Transverse colon (tissue), 4 donors: ENCODE measurements at regions of chr15 and their contacts with region 1.

Region 1: GRCh38 chr15:64046347-64047153 is at the start of gene DAPK2:
- DNase-seq: peak; percentile 83
- H3K4me3 ChIP-seq: peak within 1 kb of the TSS; percentile 58 to 83 (median 66)
- H3K27ac ChIP-seq: peak within 1 kb of the TSS; percentile 44 to 85 (median 78)
- H3K4me1 ChIP-seq: peaks cover 7 to 28% (median 22%) of the 10 kb centered on the region in 4 donors
- H3K27me3 ChIP-seq: no peaks in the 10 kb centered on the region
- CTCF ChIP-seq: peak; percentile 67 to 83 (median 71)
- EP300 ChIP-seq: no peak
- POLR2A ChIP-seq: no peak
- total RNA-seq, gene DAPK2: 45.1 to 244 (median 107) TPM

Region 2: GRCh38 chr15:63945007-63945788 is 101.4 kb before region 1 on chr15:
- in situ Hi-C with region 1: loop called in 1 of 4 experiments (anchors 25 kb)
- intact Hi-C with region 1: loop called (anchors 5 kb)
- DNase-seq: peak; percentile 83
- H3K4me3 ChIP-seq: no peak overlapping the region
- H3K27ac ChIP-seq: no peak overlapping the region
- H3K4me1 ChIP-seq: peaks cover 0 to 10% (median 1%) of the 10 kb centered on the region in 4 donors
- H3K27me3 ChIP-seq: no peaks in the 10 kb centered on the region
- CTCF ChIP-seq: peak; percentile 90 to 96 (median 94)
- EP300 ChIP-seq: no peak
- POLR2A ChIP-seq: no peak

Region 3: DNA sequence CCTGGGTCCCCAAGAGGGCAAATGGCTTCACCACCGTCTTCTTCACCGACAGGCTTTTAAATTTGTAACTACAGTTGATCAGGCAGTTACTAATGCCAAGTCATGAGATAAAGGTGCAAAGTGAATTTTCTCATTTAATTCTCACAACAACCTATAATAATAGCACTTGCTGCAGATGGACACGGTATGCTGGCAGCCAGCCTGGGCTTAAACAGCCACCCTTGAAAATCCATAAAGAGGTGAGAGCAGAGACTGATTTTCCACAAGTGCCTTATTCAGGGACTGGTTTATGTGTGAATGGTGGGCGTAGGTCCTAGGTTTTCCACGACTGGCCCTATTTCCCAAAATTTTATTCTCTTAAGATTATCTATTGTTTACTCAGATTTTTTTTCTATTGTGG is 1940.5 kb after region 1 on chr15:
- in situ Hi-C with region 1: no loop called
- intact Hi-C with region 1: loop called (anchors 5 kb)
- DNase-seq: no peak
- H3K4me3 ChIP-seq: no peak overlapping the region
- H3K27ac ChIP-seq: no peak overlapping the region
- H3K4me1 ChIP-seq: peaks cover 4 to 9% (median 6%) of the 10 kb centered on the region in 4 donors
- H3K27me3 ChIP-seq: peaks cover 38% of the 10 kb centered on the region
- CTCF ChIP-seq: no peak
- EP300 ChIP-seq: no peak
- POLR2A ChIP-seq: no peak